Activated CD4-positive, alpha-beta memory T cell treated with anti-CD3 and anti-CD28 coated beads for 36 hours (primary cell): ENCODE measurements at regions of chr11 and their contacts with region 1.

Region 1: GRCh38 chr11:59135648-59136461 is 6.8 kb upstream of the FAM111A start:
- DNase-seq: peak; percentile 91
- H3K4me3 Mint-ChIP-seq: peak overlapping the region; percentile 57
- H3K27ac Mint-ChIP-seq: no peak overlapping the region
- H3K4me1 Mint-ChIP-seq: peaks cover 7% of the 10 kb centered on the region
- H3K27me3 Mint-ChIP-seq: no peaks in the 10 kb centered on the region

Region 2: GRCh38 chr11:59053387-59053786 is 82.5 kb before region 1 on chr11:
- CTCF ChIA-PET with region 1: interaction called, 38 read pairs
- POLR2A ChIA-PET with region 1: no interaction called
- intact Hi-C with region 1: loop called (anchors 1 kb)
- DNase-seq: peak; percentile 86
- H3K4me3 Mint-ChIP-seq: no peak overlapping the region
- H3K27ac Mint-ChIP-seq: no peak overlapping the region
- H3K4me1 Mint-ChIP-seq: peaks cover 4% of the 10 kb centered on the region
- H3K27me3 Mint-ChIP-seq: peaks cover 17% of the 10 kb centered on the region

Region 3: GRCh38 chr11:59097113-59097708 is 38.6 kb before region 1 on chr11:
- CTCF ChIA-PET with region 1: interaction called, 51 read pairs
- POLR2A ChIA-PET with region 1: no interaction called
- intact Hi-C with region 1: loop called (anchors 1 kb)
- DNase-seq: peak; percentile 74
- H3K4me3 Mint-ChIP-seq: no peak overlapping the region
- H3K27ac Mint-ChIP-seq: peak overlapping the region; percentile 31
- H3K4me1 Mint-ChIP-seq: peaks cover 9% of the 10 kb centered on the region
- H3K27me3 Mint-ChIP-seq: peaks cover 17% of the 10 kb centered on the region

Region 4: DNA sequence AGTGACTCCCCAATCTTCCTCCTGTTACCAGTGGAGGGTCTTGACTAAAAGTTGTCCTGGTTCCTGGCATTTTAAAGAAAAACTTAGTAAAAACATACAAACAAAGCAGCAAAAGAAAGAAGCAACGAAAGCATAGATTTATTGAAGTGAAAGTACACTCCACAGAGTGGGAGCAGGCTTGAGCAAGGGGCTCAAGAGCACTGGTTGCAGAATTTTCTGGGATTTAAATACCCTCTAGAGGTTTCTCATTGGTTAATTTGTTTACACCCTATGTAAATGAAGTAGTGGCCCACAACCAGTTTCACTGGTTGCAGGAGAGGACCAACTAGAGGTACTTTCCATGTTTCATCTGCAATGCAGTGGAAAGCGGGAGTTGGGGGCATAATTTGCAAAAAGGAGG is 18.1 kb before region 1 on chr11:
- CTCF ChIA-PET with region 1: interaction called, 13 read pairs
- POLR2A ChIA-PET with region 1: interaction called, 3 read pairs
- intact Hi-C with region 1: no loop called
- DNase-seq: no peak
- H3K4me3 Mint-ChIP-seq: no peak overlapping the region
- H3K27ac Mint-ChIP-seq: no peak overlapping the region
- H3K4me1 Mint-ChIP-seq: peaks cover 2% of the 10 kb centered on the region
- H3K27me3 Mint-ChIP-seq: no peaks in the 10 kb centered on the region

Region 5: GRCh38 chr11:59158206-59159068 is 22.6 kb after region 1 on chr11:
- CTCF ChIA-PET with region 1: interaction called, 148 read pairs
- POLR2A ChIA-PET with region 1: no interaction called
- intact Hi-C with region 1: no loop called
- DNase-seq: peak; percentile 68
- H3K4me3 Mint-ChIP-seq: no peak overlapping the region
- H3K27ac Mint-ChIP-seq: no peak overlapping the region
- H3K4me1 Mint-ChIP-seq: peaks cover 4% of the 10 kb centered on the region
- H3K27me3 Mint-ChIP-seq: peaks cover 13% of the 10 kb centered on the region